ENCODE measurements at regions of chr12 and their contacts with region 1.

Region 1: DNA sequence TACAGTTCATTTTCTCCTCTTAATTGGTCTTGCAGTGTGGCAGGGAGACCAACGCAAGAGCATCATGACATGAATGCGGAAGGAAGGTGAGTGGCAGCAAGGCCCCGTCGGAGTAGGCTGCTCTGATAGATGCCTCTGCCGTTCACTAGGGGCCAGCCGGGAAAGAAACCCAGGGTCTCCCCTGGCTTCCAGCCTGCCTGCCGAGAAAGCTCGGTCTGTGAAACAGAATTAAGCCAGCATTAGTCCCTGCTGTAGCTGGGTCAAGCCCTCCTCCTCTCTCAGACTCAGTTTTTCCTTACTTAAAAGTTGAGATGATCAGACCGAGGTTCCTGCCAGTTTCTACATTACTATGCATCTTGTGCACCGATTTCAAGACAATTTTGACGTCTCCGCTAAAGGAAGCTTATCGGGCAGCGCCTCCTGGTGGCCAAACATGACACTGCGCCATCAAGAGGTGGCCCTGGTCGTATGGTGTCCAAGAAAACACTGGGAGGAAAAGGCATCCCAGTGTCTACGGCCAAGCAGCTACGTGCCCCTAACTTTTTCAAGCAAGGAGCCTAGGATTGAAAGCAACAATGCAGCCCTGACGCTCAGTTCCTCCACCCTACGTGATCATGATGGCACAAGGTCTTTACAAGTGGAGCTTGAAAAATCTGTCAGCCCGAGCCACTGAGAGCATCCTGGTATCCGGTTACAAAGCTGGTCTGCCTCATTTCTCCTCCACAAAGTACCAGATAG is 131.6 kb downstream of the KSR2 start:
- DNase-seq: peak; percentile 20
- ATAC-seq: peak; percentile 88
- H3K4me3 ChIP-seq: no peak overlapping the region
- H3K27ac ChIP-seq: no peak overlapping the region
- H3K4me1 ChIP-seq: no peaks in the 10 kb centered on the region
- H3K27me3 ChIP-seq: no peaks in the 10 kb centered on the region; a peak in 1 of 4 replicates
- CTCF ChIP-seq: peak; percentile 95 to 98 (median 96)
- EP300 ChIP-seq: no peak
- POLR2A ChIP-seq: no peak
- RAD21 ChIP-seq: peak; percentile 89

Region 2: DNA sequence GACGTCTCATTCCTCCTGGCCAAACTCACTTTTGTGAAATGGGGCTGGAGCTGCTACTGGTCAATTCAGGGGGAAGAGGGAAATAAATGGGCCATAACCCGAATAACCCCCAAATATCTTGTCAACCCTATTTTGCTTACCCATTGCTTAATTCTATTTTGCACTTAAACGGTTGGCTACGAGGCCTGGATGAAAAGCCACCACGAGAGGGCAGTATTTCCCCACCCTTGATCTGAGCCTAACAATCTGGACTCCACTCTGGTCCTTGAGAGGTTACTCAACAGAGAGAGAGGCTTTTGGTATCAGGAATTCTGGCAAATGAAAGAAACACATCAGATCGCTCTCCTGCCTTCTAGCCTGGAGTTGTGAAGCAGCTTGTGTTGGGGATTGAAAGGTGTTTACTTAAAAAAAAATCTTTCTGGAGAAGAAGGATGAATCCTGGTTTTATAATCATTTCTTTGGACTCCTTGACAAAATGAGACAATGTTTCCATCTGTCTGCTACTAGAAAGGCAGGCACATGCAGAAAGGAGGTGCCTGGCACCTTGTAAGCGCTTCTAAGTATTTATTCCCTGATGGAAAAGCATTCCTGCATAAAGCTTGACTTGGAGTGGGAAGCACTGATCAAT is 624.5 kb before region 1 on chr12:
- CTCF ChIA-PET with region 1: interaction called, 17 read pairs
- POLR2A ChIA-PET with region 1: interaction called, 3 read pairs
- RAD21 ChIA-PET with region 1: no interaction called
- SMC1A ChIA-PET with region 1: interaction called, 3 read pairs
- in situ Hi-C with region 1: no loop called
- intact Hi-C with region 1: loop called (anchors 1 kb)
- DNase-seq: no peak
- ATAC-seq: peak; percentile 88
- H3K4me3 ChIP-seq: no peak overlapping the region
- H3K27ac ChIP-seq: no peak overlapping the region
- H3K4me1 ChIP-seq: no peaks in the 10 kb centered on the region; the same call in 1 of the 2 replicates
- H3K27me3 ChIP-seq: no peaks in the 10 kb centered on the region; a peak in 1 of 4 replicates
- CTCF ChIP-seq: peak; percentile 88 to 94 (median 89)
- EP300 ChIP-seq: no peak
- POLR2A ChIP-seq: no peak
- RAD21 ChIP-seq: peak; percentile 84

Region 3: GRCh38 chr12:117236456-117237001 is 600.6 kb before region 1 on chr12:
- CTCF ChIA-PET with region 1: interaction called, 27 read pairs
- POLR2A ChIA-PET with region 1: no interaction called
- RAD21 ChIA-PET with region 1: interaction called, 13 read pairs
- SMC1A ChIA-PET with region 1: no interaction called
- in situ Hi-C with region 1: no loop called
- intact Hi-C with region 1: loop called (anchors 2 kb)
- DNase-seq: no peak
- ATAC-seq: peak; percentile 89
- H3K4me3 ChIP-seq: no peak overlapping the region
- H3K27ac ChIP-seq: no peak overlapping the region
- H3K4me1 ChIP-seq: no peaks in the 10 kb centered on the region
- H3K27me3 ChIP-seq: peaks cover 3 to 6% of the 10 kb centered on the region in 2 experiments; a peak in 3 of 4 replicates
- CTCF ChIP-seq: peak; percentile 70 to 84 (median 78)
- EP300 ChIP-seq: no peak
- POLR2A ChIP-seq: no peak
- RAD21 ChIP-seq: peak; percentile 60

Region 4: DNA sequence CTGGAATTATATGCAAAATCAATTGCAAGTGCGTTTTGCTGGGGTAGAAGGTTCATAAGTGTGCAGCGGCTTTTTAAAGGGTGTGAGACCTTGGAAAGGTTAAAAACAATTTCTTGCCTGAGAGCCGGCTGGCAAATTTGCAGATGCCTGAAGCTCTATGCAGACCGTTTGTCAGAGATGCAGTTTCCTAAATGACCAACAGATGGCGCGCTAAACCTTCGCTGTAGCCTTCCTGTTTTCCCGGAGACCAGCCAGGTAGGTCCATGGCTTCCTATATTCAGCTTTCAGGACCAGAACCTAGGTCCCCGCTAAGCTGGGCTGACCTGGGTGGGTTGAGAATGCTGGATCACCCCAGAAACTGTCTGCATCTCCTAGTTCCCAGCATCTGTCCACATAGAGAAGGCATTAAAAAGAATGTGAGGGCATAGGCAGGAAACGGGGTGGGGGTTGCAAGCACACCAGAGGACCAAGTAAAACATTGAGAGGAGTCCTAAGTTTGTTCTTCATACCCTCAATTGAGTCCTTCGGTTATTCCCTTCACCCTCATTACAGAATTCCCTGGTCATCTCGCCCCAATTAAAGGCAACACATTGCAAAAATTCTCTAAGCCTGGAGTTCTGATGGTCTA is 470.0 kb before region 1 on chr12:
- CTCF ChIA-PET with region 1: interaction called, 78 read pairs
- POLR2A ChIA-PET with region 1: no interaction called
- RAD21 ChIA-PET with region 1: interaction called, 22 read pairs
- SMC1A ChIA-PET with region 1: interaction called, 25 read pairs
- in situ Hi-C with region 1: loop called (anchors 5 kb)
- intact Hi-C with region 1: loop called (anchors 1 kb)
- DNase-seq: peak; percentile 12
- ATAC-seq: peak; percentile 78
- H3K4me3 ChIP-seq: no peak overlapping the region
- H3K27ac ChIP-seq: no peak overlapping the region
- H3K4me1 ChIP-seq: no peaks in the 10 kb centered on the region
- H3K27me3 ChIP-seq: peaks cover 0 to 2% of the 10 kb centered on the region in 2 experiments; a peak in 1 of 4 replicates
- CTCF ChIP-seq: peak; percentile 83 to 87 (median 86)
- EP300 ChIP-seq: no peak
- POLR2A ChIP-seq: no peak
- RAD21 ChIP-seq: peak; percentile 89

Region 5: DNA sequence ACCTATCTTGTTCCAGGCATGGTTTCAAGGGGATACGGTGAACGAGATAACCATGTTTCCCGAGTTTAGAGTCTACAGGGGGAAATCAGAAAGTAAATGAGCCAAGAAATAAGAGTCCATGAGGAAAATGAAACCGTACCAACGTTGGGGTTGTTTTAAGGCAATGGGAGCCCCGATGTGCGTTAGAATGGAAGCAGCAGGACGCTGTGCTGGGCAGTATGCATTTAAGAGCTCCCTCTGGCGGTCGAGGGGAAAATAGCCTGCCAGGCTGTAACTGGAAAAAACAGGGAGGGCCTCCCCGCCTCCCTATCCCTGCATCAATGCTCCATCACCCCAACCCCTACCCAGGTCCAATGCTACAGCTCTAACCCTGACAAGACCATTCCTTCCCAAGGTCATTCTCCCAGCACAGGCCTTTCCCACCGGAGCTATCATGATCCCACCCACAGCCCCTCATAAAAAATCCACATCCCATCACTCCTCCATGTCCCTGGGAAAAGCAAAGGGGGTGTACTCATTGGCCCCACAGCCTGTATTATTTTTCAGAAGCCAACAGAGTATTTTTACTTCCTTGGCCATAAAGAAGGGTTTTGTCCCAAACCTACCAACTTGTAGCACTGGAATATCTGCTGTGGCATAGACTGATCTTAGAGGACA is 249.4 kb before region 1 on chr12:
- CTCF ChIA-PET with region 1: interaction called, 13 read pairs
- POLR2A ChIA-PET with region 1: no interaction called
- RAD21 ChIA-PET with region 1: no interaction called
- SMC1A ChIA-PET with region 1: interaction called, 6 read pairs
- in situ Hi-C with region 1: no loop called
- intact Hi-C with region 1: loop called (anchors 5 kb)
- DNase-seq: no peak
- ATAC-seq: peak; percentile 82
- H3K4me3 ChIP-seq: no peak overlapping the region
- H3K27ac ChIP-seq: no peak overlapping the region
- H3K4me1 ChIP-seq: no peaks in the 10 kb centered on the region
- H3K27me3 ChIP-seq: peaks cover 0 to 2% of the 10 kb centered on the region in 2 experiments; a peak in 2 of 4 replicates
- CTCF ChIP-seq: peak; percentile 84 to 91 (median 86)
- EP300 ChIP-seq: no peak
- POLR2A ChIP-seq: no peak
- RAD21 ChIP-seq: peak; percentile 61

Region 6: DNA sequence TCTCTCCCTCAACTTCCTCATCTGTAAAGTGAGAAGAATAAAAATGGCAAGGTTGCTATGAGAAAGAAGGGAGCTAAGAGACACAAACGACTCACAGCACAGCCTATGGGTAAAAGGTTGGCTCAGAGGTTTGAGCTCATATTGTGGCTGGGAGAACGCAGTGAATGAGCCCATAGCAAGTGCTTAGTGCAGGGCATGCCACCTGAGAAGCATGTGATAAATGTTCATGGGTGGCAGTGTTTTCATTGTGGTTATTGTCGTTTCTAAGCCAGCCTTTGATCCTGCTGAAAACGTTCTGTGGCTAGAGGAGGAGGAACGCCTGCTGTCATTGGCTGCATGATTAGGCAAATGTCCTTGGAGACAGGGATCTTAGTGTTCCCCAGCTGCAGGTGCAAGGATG is 18.8 kb before region 1 on chr12:
- CTCF ChIA-PET with region 1: interaction called, 10 read pairs
- POLR2A ChIA-PET with region 1: no interaction called
- RAD21 ChIA-PET with region 1: no interaction called
- SMC1A ChIA-PET with region 1: interaction called, 3 read pairs
- in situ Hi-C with region 1: no loop called
- intact Hi-C with region 1: no loop called
- DNase-seq: no peak
- ATAC-seq: no peak
- H3K4me3 ChIP-seq: no peak overlapping the region
- H3K27ac ChIP-seq: no peak overlapping the region
- H3K4me1 ChIP-seq: no peaks in the 10 kb centered on the region
- H3K27me3 ChIP-seq: no peaks in the 10 kb centered on the region
- CTCF ChIP-seq: no peak
- EP300 ChIP-seq: no peak
- POLR2A ChIP-seq: no peak
- RAD21 ChIP-seq: no peak

Region 7: GRCh38 chr12:117850048-117850447 is 12.9 kb after region 1 on chr12:
- CTCF ChIA-PET with region 1: interaction called, 61 read pairs
- POLR2A ChIA-PET with region 1: interaction called, 4 read pairs
- RAD21 ChIA-PET with region 1: interaction called, 16 read pairs
- SMC1A ChIA-PET with region 1: interaction called, 10 read pairs
- in situ Hi-C with region 1: no loop called
- intact Hi-C with region 1: no loop called
- DNase-seq: no peak
- ATAC-seq: peak; percentile 65
- H3K4me3 ChIP-seq: no peak overlapping the region
- H3K27ac ChIP-seq: no peak overlapping the region
- H3K4me1 ChIP-seq: peaks cover 6% of the 10 kb centered on the region; the same call in 1 of the 2 replicates
- H3K27me3 ChIP-seq: no peaks in the 10 kb centered on the region
- CTCF ChIP-seq: peak; percentile 67 to 94 (median 82)
- EP300 ChIP-seq: no peak
- POLR2A ChIP-seq: no peak
- RAD21 ChIP-seq: peak; percentile 46

Region 8: DNA sequence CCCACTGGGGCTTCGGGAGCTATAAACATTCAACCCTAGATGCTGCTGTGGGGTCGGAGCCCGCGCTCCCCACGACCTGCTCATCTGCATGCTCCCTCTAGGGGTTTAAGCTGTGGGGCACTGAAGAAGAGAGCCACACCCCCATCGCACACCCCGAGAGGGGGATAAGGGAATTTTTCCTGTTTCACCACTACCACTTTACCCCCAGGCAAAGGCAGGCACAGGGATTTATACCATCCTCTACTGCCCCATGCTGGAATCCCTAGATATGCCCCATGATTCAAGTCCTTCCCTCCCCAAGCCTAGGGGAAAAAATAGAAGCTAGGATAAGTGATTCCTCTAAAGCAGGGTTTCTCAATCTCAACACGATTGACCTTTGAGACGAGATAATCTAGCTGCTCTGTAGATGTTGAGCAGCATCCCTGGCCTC is 1437.5 kb after region 1 on chr12:
- CTCF ChIA-PET with region 1: no interaction called
- POLR2A ChIA-PET with region 1: no interaction called
- RAD21 ChIA-PET with region 1: no interaction called
- SMC1A ChIA-PET with region 1: no interaction called
- in situ Hi-C with region 1: no loop called
- intact Hi-C with region 1: no loop called
- DNase-seq: no peak
- ATAC-seq: no peak
- H3K4me3 ChIP-seq: no peak overlapping the region
- H3K27ac ChIP-seq: no peak overlapping the region
- H3K4me1 ChIP-seq: no peaks in the 10 kb centered on the region
- H3K27me3 ChIP-seq: no peaks in the 10 kb centered on the region; a peak in 1 of 4 replicates
- CTCF ChIP-seq: no peak
- EP300 ChIP-seq: no peak
- POLR2A ChIP-seq: no peak
- RAD21 ChIP-seq: no peak